Prostate gland (tissue), 2 donors: ENCODE measurements at regions of chr19 and their contacts with region 1.

Region 1: GRCh38 chr19:6056801-6057650 is 53.3 kb downstream of the RFX2 start:
- DNase-seq: peak; percentile 66
- H3K4me3 ChIP-seq: no peak overlapping the region
- H3K27ac ChIP-seq: peak overlapping the region; percentile 59 to 76
- H3K4me1 ChIP-seq: no peaks in the 10 kb centered on the region
- H3K27me3 ChIP-seq: no peaks in the 10 kb centered on the region
- CTCF ChIP-seq: no peak
- POLR2A ChIP-seq: no peak

Region 2: DNA sequence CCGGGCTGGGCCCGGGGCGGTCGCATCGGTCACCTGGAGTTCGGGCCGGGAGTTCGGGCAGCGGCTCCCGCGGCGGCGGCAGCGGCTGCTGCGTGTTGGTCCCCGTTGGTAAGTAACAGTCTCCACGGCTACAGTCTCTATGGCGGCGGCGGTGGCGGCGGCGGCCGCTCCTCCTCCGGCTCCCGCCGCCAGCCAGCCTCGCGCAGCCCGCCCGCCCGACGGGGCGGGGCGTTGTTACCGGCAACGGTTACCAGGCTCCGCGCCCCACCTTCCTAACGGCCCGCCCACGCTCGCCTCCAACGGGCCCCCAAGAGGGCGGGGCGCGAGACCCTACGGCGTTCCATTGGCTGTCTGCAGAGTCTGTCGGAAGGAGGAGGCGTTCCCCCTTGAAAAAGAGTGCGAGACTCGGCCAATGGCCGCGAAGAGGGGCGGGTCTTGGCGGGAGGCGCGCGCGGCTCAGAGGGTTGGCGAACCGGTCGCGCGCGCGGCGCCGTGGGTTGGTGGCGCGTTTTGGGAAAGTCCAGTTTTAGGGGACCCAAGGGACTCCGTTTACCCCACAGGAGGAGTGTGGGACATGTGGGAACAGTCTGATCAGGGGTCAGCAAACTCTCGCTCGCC is 53.4 kb after region 1 on chr19 and contains the start of gene RFX2:
- intact Hi-C with region 1: loop called (anchors 1 kb)
- DNase-seq: peak; percentile 99
- H3K4me3 ChIP-seq: peak within 1 kb of the TSS; percentile 46 to 49
- H3K27ac ChIP-seq: peak within 1 kb of the TSS; percentile 78 to 79
- H3K4me1 ChIP-seq: no peaks in the 10 kb centered on the region
- H3K27me3 ChIP-seq: no peaks in the 10 kb centered on the region
- CTCF ChIP-seq: peak in 1 of 4 experiments; percentile 27
- POLR2A ChIP-seq: peak; percentile 65
- total RNA-seq, gene RFX2: 13.4 to 25.3 TPM

Region 3: GRCh38 chr19:6279931-6280591 is 223.0 kb after region 1 on chr19 and contains the start of gene MLLT1:
- intact Hi-C with region 1: loop called (anchors 10 kb)
- DNase-seq: peak; percentile 97
- H3K4me3 ChIP-seq: peak within 1 kb of the TSS; percentile 76 to 83
- H3K27ac ChIP-seq: peak within 1 kb of the TSS; percentile 62 to 81
- H3K4me1 ChIP-seq: peaks cover 9% of the 10 kb centered on the region
- H3K27me3 ChIP-seq: no peaks in the 10 kb centered on the region
- CTCF ChIP-seq: peak; percentile 50 to 85 (median 78)
- POLR2A ChIP-seq: peak; percentile 43
- total RNA-seq, gene MLLT1: 39.9 to 41.4 TPM